CD14-positive monocyte (primary cell): ENCODE measurements at regions of chr11 and their contacts with region 1.

Region 1: DNA sequence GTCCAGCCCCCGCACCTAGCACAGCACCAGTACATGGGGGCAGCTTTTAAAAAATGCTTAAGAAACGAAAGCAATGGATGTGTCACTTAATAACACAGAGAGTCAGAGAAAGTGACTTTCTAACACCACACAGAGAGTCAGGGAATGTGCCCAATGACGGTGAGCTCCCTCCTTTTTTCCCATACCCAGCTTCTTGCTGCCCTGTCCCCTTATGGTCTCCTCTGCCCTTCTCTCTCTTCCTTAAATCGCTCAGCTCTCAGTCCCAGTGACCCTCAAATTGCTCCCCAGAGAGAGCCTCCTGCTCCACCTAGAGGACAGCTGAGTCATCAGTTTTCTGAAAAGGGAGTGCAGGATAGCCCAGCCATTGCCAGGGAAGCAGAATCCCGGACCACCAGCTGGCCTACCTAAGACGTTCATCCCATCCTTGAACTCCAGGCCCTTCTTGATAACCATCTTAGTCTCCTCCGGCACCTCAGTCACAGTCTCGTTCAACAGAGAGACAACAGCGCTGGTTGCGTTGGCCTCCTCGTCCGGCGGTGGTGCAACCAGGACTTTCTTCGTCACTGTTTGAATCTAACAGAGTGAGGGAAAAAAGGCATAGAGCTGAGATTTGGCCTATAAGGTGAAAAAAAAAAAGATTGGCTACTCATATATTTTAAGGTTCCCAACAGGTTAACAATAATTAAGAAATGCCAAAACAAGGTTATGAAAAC is 113.5 kb downstream of the SLC1A2 start:
- DNase-seq: peak; percentile 30 to 72 (median 50)
- H3K4me3 ChIP-seq: peak overlapping the region in 1 of 3 experiments; percentile 27
- H3K4me3 Mint-ChIP-seq: peak overlapping the region; percentile 25 to 65
- H3K27ac ChIP-seq: peak overlapping the region; percentile 91 to 98
- H3K27ac Mint-ChIP-seq: peak overlapping the region; percentile 98 to 100 (median 100)
- H3K4me1 ChIP-seq: peaks cover 78 to 83% of the 10 kb centered on the region in 2 donors
- H3K4me1 Mint-ChIP-seq: peaks cover 84% of the 10 kb centered on the region
- H3K27me3 ChIP-seq: no peaks in the 10 kb centered on the region
- H3K27me3 Mint-ChIP-seq: peaks cover 0 to 3% (median 2%) of the 10 kb centered on the region in 3 donors
- CTCF ChIP-seq: peak; percentile 35

Region 2: GRCh38 chr11:35006389-35007128 is 299.3 kb before region 1 on chr11:
- intact Hi-C with region 1: loop called in 1 of 2 experiments (anchors 10 kb)
- DNase-seq: peak; percentile 86 to 91 (median 89)
- H3K4me3 ChIP-seq: no peak overlapping the region
- H3K4me3 Mint-ChIP-seq: no peak overlapping the region
- H3K27ac ChIP-seq: peak overlapping the region in 1 of 2 donors; percentile 63
- H3K27ac Mint-ChIP-seq: peak overlapping the region; percentile 62 to 94 (median 83)
- H3K4me1 ChIP-seq: peaks cover 14 to 20% of the 10 kb centered on the region in 2 donors
- H3K4me1 Mint-ChIP-seq: peaks cover 23% of the 10 kb centered on the region
- H3K27me3 ChIP-seq: no peaks in the 10 kb centered on the region
- H3K27me3 Mint-ChIP-seq: no peaks in the 10 kb centered on the region
- CTCF ChIP-seq: no peak

Region 3: DNA sequence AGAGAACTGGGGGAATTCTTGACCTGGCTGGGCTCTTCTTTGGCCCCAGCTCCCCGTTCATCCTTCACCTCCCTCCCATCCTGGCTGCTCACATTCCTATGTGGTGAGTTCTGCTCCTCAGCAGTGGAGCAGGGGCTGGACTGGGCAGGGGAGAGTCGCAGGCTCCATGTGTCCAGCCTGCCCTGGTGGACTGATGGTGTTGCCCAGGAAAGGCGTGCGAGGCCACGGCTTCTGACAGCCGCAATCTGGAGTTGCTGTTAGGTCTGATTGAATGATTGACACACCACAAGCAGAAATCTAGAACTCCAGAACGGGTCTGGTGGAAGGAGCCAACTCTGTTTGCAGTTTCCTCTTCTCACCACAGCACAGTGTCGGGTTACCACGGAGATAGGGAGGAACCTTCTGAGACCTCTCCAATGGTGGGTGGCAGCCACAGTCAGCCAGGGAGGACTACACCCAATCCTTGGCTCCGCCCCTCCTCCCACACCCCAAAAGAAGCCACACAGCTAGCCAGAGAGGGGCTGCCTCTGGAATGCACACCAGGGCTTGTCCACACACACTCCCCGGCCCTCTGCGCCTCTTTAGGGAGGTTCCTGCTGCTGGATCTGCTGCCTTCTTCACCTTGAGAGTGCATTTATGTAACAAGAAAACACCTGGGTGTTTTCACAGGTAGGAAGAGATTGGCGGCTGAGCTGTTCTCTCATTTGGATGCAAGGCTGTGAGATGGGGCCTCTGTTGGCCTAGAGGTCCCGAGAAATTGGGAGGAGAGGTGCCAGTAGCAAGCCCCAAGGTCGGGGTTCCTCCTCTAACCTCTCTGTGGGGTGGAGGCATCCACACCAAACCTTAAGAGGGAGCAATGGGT is 223.3 kb before region 1 on chr11:
- intact Hi-C with region 1: loop called in 1 of 2 experiments (anchors 10 kb)
- DNase-seq: peak; percentile 95 to 98 (median 97)
- H3K4me3 ChIP-seq: peak overlapping the region in 1 of 3 experiments; percentile 43
- H3K4me3 Mint-ChIP-seq: peak overlapping the region; percentile 43 to 80
- H3K27ac ChIP-seq: peak overlapping the region; percentile 99 to 100
- H3K27ac Mint-ChIP-seq: peak overlapping the region; percentile 97 to 100 (median 99)
- H3K4me1 ChIP-seq: peaks cover 57 to 58% of the 10 kb centered on the region in 2 donors
- H3K4me1 Mint-ChIP-seq: peaks cover 70% of the 10 kb centered on the region
- H3K27me3 ChIP-seq: no peaks in the 10 kb centered on the region
- H3K27me3 Mint-ChIP-seq: peaks cover 0 to 2% (median 0%) of the 10 kb centered on the region in 3 donors
- CTCF ChIP-seq: no peak

Region 4: DNA sequence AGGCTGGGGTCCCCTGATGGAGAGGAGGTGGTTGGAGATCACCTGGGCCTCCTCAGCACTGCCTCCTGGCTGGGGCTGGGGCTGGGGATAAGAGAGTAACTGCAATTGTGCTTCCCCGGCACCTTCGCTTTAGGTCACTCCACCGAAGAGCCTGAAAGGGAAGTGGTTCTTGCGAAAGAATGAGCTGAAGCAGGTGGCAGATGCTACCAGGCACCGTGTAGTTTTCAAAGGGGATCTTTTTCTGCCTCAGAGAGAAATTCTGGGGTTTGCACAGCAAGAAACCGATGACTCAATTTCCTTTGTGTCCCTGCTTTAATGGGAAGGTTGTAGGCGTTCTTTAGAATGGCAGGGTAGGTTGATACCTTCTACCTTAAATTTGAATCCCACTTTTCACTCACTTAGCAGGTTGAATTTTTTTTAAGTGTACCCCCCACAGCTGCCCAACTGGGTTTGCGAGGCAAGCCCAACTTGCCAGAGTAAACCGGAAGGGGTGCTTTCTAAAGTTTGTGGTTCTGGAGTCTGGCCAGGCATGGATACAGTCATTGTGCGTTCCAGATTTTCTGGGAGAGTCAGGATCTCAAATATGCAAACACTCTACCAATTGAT is 161.6 kb before region 1 on chr11:
- intact Hi-C with region 1: loop called in 1 of 2 experiments (anchors 5 kb)
- DNase-seq: peak; percentile 75 to 95 (median 87)
- H3K4me3 ChIP-seq: peak overlapping the region; percentile 15 to 93 (median 15)
- H3K4me3 Mint-ChIP-seq: peak overlapping the region; percentile 64 to 73
- H3K27ac ChIP-seq: peak overlapping the region; percentile 67 to 98
- H3K27ac Mint-ChIP-seq: peak overlapping the region; percentile 84 to 98 (median 87)
- H3K4me1 ChIP-seq: peaks cover 53 to 78% of the 10 kb centered on the region in 2 donors
- H3K4me1 Mint-ChIP-seq: peaks cover 77% of the 10 kb centered on the region
- H3K27me3 ChIP-seq: no peaks in the 10 kb centered on the region
- H3K27me3 Mint-ChIP-seq: no peaks in the 10 kb centered on the region
- CTCF ChIP-seq: no peak

Region 5: GRCh38 chr11:35214792-35215193 is 91.0 kb before region 1 on chr11:
- intact Hi-C with region 1: loop called (anchors 5 to 10 kb)
- DNase-seq: peak; percentile 92 to 98 (median 93)
- H3K4me3 ChIP-seq: peak overlapping the region in 1 of 3 experiments; percentile 30
- H3K4me3 Mint-ChIP-seq: peak overlapping the region in 1 of 2 donors; percentile 35
- H3K27ac ChIP-seq: peak overlapping the region; percentile 16 to 97
- H3K27ac Mint-ChIP-seq: peak overlapping the region; percentile 95 to 99 (median 98)
- H3K4me1 ChIP-seq: peaks cover 62 to 74% of the 10 kb centered on the region in 2 donors
- H3K4me1 Mint-ChIP-seq: peaks cover 71% of the 10 kb centered on the region
- H3K27me3 ChIP-seq: no peaks in the 10 kb centered on the region
- H3K27me3 Mint-ChIP-seq: no peaks in the 10 kb centered on the region
- CTCF ChIP-seq: no peak

Region 6: GRCh38 chr11:35237860-35238715 is 67.7 kb before region 1 on chr11:
- intact Hi-C with region 1: loop called in 1 of 2 experiments (anchors 5 kb)
- DNase-seq: peak; percentile 47 to 69 (median 66)
- H3K4me3 ChIP-seq: no peak overlapping the region
- H3K4me3 Mint-ChIP-seq: no peak overlapping the region
- H3K27ac ChIP-seq: no peak overlapping the region
- H3K27ac Mint-ChIP-seq: peak overlapping the region in 5 of 7 donors; percentile 7 to 85 (median 70)
- H3K4me1 ChIP-seq: peaks cover 36 to 45% of the 10 kb centered on the region in 2 donors
- H3K4me1 Mint-ChIP-seq: peaks cover 48% of the 10 kb centered on the region
- H3K27me3 ChIP-seq: no peaks in the 10 kb centered on the region
- H3K27me3 Mint-ChIP-seq: peaks cover 0 to 3% (median 0%) of the 10 kb centered on the region in 3 donors
- CTCF ChIP-seq: peak; percentile 87

Region 7: GRCh38 chr11:35337136-35337918 is 31.5 kb after region 1 on chr11:
- intact Hi-C with region 1: loop called (anchors 5 kb)
- DNase-seq: peak; percentile 86 to 92 (median 92)
- H3K4me3 ChIP-seq: no peak overlapping the region
- H3K4me3 Mint-ChIP-seq: no peak overlapping the region
- H3K27ac ChIP-seq: peak overlapping the region in 1 of 2 donors; percentile 83
- H3K27ac Mint-ChIP-seq: peak overlapping the region; percentile 73 to 95 (median 89)
- H3K4me1 ChIP-seq: peaks cover 7 to 24% of the 10 kb centered on the region in 2 donors
- H3K4me1 Mint-ChIP-seq: peaks cover 23% of the 10 kb centered on the region
- H3K27me3 ChIP-seq: no peaks in the 10 kb centered on the region
- H3K27me3 Mint-ChIP-seq: peaks cover 0 to 3% (median 2%) of the 10 kb centered on the region in 3 donors
- CTCF ChIP-seq: no peak